ENCODE measurements at regions of chr15 and their contacts with region 1.

Region 1: GRCh38 chr15:81274931-81275707 is 48.8 kb downstream of the STARD5 start:
- H3K4me3 Mint-ChIP-seq: no peak overlapping the region
- H3K27ac Mint-ChIP-seq: peak overlapping the region; percentile 32
- H3K4me1 Mint-ChIP-seq: peaks cover 10% of the 10 kb centered on the region
- H3K27me3 Mint-ChIP-seq: peaks cover 4% of the 10 kb centered on the region

Region 2: DNA sequence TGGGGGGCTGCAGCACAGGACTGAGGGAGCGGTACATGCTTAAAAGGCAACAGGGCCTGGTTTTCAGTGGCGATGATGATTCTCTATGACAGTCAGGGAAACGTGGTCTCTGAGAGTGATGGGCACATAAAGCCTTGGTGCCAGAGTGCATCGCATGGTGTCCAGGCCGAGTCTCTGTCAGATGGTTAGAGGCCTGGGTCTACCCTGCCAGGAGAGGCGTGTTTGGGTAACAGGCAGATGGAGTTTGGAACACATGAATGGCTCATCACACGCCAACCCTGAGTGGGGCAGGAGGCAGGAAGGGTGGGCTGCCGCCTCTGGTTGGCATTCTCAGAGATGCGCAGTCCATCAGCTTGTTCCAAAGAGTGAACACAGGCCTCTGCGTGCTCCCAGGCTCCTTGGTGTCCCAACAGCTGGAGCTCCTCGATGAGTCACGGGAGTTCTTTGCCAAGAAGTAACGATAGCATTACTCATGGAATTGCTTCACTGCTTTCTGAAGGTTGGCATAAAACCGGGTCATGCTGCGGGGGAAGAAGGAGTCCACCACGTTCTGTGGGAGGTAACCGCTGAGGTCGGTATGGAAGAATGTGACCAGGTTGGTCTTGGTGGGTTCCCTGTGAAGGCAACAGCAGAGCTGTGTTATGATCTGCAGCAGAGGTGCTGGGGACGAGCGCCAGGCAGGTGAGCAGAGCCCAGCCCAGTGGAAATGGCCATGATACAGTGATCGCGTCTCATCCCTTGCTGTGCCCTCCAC is 37.8 kb after region 1 on chr15:
- intact Hi-C with region 1: loop called (anchors 5 kb)
- H3K4me3 Mint-ChIP-seq: no peak overlapping the region
- H3K27ac Mint-ChIP-seq: peak overlapping the region; percentile 94
- H3K4me1 Mint-ChIP-seq: peaks cover 74% of the 10 kb centered on the region
- H3K27me3 Mint-ChIP-seq: no peaks in the 10 kb centered on the region

Region 3: DNA sequence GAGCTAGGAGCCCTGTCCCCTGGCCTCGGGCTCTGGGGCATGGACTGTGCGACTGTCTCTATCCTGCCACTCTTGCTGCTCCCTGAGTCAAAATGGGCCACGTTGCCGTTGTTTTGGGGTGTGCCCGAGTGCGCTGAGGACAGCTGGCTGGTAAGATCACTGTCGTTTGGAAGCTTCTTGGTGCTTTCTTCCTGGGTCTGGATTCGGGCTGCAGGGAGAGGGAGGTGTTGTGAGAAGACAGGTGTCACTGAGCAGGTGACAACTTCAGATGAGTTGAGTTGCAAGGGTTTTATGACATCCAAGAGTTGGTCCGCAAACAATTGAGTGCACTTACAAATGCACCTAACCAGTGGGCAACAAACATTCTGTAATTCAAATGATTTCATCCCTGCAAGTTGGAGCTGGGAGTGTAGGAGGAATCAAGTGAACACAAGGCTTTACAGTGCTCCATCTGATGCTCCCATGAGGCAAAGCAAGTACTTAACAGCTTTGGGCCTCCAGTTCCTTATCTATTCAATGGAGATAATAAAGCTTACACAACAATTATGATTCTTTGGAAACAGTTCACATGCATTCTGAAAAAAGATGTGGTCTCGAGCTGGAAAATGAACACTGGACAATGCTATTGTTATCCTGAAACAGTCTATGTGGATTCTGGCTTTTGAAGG is 59.8 kb after region 1 on chr15:
- intact Hi-C with region 1: loop called (anchors 2 kb)
- H3K4me3 Mint-ChIP-seq: no peak overlapping the region
- H3K27ac Mint-ChIP-seq: no peak overlapping the region
- H3K4me1 Mint-ChIP-seq: peaks cover 12% of the 10 kb centered on the region
- H3K27me3 Mint-ChIP-seq: peaks cover 4% of the 10 kb centered on the region

Region 4: DNA sequence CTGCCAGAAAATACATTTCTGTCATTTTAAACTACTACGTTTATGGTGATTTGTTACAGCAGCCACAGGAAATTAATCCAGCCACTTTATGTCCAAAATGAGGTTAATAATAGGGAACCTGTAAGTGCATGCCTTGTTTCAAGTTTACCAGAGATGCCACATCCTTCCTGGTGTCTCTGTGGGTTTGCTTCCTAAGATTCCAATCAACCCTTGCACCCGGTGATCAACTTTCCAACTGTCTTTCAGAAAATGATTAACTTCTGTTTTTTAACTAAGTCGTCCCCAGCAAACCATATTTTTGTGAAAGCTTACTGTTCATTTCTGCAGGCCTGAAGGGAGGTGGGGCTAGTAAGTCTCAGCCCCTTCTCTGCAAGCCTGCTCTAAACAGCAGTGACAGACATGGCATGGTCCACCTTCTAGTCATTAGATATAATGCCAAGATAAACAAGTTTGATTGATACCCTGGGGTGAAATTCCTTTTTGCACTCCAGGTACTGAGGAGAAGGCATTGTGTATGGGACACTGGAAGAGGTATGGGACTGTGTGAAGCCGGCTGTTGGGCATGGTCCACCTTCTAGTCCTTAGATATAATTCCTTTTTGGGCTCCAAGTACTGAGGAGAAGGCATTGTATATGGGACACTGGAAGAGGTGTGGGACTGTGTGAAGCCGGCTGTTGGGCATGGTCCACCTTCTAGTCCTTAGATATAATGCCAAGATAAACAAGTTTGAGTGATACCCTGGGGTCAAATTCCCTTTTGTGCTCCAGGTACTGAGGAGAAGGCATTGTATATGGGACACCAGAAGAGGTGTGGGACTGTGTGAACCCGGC is 110.0 kb after region 1 on chr15:
- intact Hi-C with region 1: no loop called
- H3K4me3 Mint-ChIP-seq: no peak overlapping the region
- H3K27ac Mint-ChIP-seq: no peak overlapping the region
- H3K4me1 Mint-ChIP-seq: no peaks in the 10 kb centered on the region
- H3K27me3 Mint-ChIP-seq: peaks cover 3% of the 10 kb centered on the region

Region 5: GRCh38 chr15:81400640-81401236 is 125.6 kb after region 1 on chr15:
- intact Hi-C with region 1: loop called (anchors 1 kb)
- H3K4me3 Mint-ChIP-seq: no peak overlapping the region
- H3K27ac Mint-ChIP-seq: no peak overlapping the region
- H3K4me1 Mint-ChIP-seq: no peaks in the 10 kb centered on the region
- H3K27me3 Mint-ChIP-seq: peaks cover 1% of the 10 kb centered on the region

Measured in dendritic cell treated with granulocyte-macrophage colony-stimulating factor and Interleukin-4, amounts not matched to agents 40 ng/mL and 50 ng/mL, for 4 days (primary cell).